ENCODE measurements at regions of chr1 and their contacts with region 1.

Region 1: DNA sequence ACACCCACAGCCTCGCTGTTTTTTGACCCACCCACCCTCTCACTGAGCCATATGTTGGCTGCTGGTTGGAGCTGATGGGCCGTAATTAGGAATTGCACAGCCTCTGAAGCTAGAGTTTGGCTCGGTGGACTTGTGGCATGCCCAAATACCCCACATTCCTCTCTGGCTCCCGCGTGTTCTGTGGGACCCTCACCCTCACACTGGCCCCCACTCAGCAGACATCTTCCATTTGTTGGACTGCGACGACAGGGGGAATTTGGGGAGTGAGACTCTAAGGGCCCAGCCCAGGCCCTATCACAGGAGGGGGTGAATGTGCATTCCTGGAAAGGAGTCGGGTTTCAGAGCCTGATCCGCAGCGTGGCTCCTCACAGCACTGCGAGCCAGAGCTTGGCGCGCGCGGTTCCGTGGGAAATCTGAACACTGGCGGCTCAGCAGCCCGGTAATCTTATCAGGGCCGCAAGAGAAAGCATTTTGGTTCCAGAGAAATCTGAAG is 5.2 kb downstream of the RCSD1 start:
- DNase-seq: no peak
- ATAC-seq: no peak
- H3K4me3 ChIP-seq: no peak overlapping the region
- H3K4me3 Mint-ChIP-seq: no peak overlapping the region
- H3K27ac ChIP-seq: peak overlapping the region; percentile 59 to 90
- H3K27ac Mint-ChIP-seq: peak overlapping the region; percentile 93
- H3K4me1 ChIP-seq: peaks cover 84% of the 10 kb centered on the region
- H3K4me1 Mint-ChIP-seq: peaks cover 88% of the 10 kb centered on the region
- H3K27me3 ChIP-seq: no peaks in the 10 kb centered on the region
- H3K27me3 Mint-ChIP-seq: no peaks in the 10 kb centered on the region
- CTCF ChIP-seq: no peak

Region 2: GRCh38 chr1:167342846-167343245 is 292.4 kb before region 1 on chr1:
- CTCF ChIA-PET with region 1: no interaction called
- POLR2A ChIA-PET with region 1: no interaction called
- intact Hi-C with region 1: no loop called
- DNase-seq: peak in 3 of 14 experiments; percentile 17 to 33 (median 28)
- ATAC-seq: no peak
- H3K4me3 ChIP-seq: no peak overlapping the region
- H3K4me3 Mint-ChIP-seq: no peak overlapping the region
- H3K27ac ChIP-seq: no peak overlapping the region
- H3K27ac Mint-ChIP-seq: no peak overlapping the region
- H3K4me1 ChIP-seq: no peaks in the 10 kb centered on the region
- H3K4me1 Mint-ChIP-seq: peaks cover 5% of the 10 kb centered on the region
- H3K27me3 ChIP-seq: no peaks in the 10 kb centered on the region
- H3K27me3 Mint-ChIP-seq: no peaks in the 10 kb centered on the region
- CTCF ChIP-seq: peak; percentile 36

Region 3: GRCh38 chr1:167553136-167554027 is 81.8 kb before region 1 on chr1 and contains the start of gene CREG1:
- CTCF ChIA-PET with region 1: interaction called, 20 read pairs
- POLR2A ChIA-PET with region 1: interaction called, 14 read pairs
- intact Hi-C with region 1: loop called (anchors 1 to 10 kb)
- DNase-seq: peak; percentile 76 to 95 (median 86)
- ATAC-seq: peak; percentile 97
- H3K4me3 ChIP-seq: peak within 1 kb of the TSS; percentile 75
- H3K4me3 Mint-ChIP-seq: peak within 1 kb of the TSS; percentile 96
- H3K27ac ChIP-seq: peak within 1 kb of the TSS in 1 of 2 donors; percentile 25
- H3K27ac Mint-ChIP-seq: peak within 1 kb of the TSS; percentile 81
- H3K4me1 ChIP-seq: peaks cover 25% of the 10 kb centered on the region
- H3K4me1 Mint-ChIP-seq: peaks cover 42% of the 10 kb centered on the region
- H3K27me3 ChIP-seq: no peaks in the 10 kb centered on the region
- H3K27me3 Mint-ChIP-seq: no peaks in the 10 kb centered on the region
- CTCF ChIP-seq: no peak
- total RNA-seq, gene CREG1: 10.7 to 11.2 TPM

Region 4: GRCh38 chr1:167578939-167579521 is 56.2 kb before region 1 on chr1:
- CTCF ChIA-PET with region 1: no interaction called
- POLR2A ChIA-PET with region 1: no interaction called
- intact Hi-C with region 1: no loop called
- DNase-seq: no peak
- ATAC-seq: no peak
- H3K4me3 ChIP-seq: no peak overlapping the region
- H3K4me3 Mint-ChIP-seq: no peak overlapping the region
- H3K27ac ChIP-seq: no peak overlapping the region
- H3K27ac Mint-ChIP-seq: no peak overlapping the region
- H3K4me1 ChIP-seq: no peaks in the 10 kb centered on the region
- H3K4me1 Mint-ChIP-seq: no peaks in the 10 kb centered on the region
- H3K27me3 ChIP-seq: no peaks in the 10 kb centered on the region
- H3K27me3 Mint-ChIP-seq: peaks cover 8% of the 10 kb centered on the region
- CTCF ChIP-seq: no peak

Region 5: GRCh38 chr1:167650269-167651160 is 15.3 kb after region 1 on chr1:
- CTCF ChIA-PET with region 1: interaction called, 12 read pairs
- POLR2A ChIA-PET with region 1: interaction called, 16 read pairs
- intact Hi-C with region 1: loop called in 1 of 2 experiments (anchors 1 kb)
- DNase-seq: peak in 2 of 14 experiments; percentile 20 to 30
- ATAC-seq: no peak
- H3K4me3 ChIP-seq: no peak overlapping the region
- H3K4me3 Mint-ChIP-seq: peak overlapping the region; percentile 81
- H3K27ac ChIP-seq: peak overlapping the region; percentile 28 to 57
- H3K27ac Mint-ChIP-seq: peak overlapping the region; percentile 81
- H3K4me1 ChIP-seq: peaks cover 88% of the 10 kb centered on the region
- H3K4me1 Mint-ChIP-seq: peaks cover 95% of the 10 kb centered on the region
- H3K27me3 ChIP-seq: no peaks in the 10 kb centered on the region
- H3K27me3 Mint-ChIP-seq: no peaks in the 10 kb centered on the region
- CTCF ChIP-seq: no peak

Region 6: DNA sequence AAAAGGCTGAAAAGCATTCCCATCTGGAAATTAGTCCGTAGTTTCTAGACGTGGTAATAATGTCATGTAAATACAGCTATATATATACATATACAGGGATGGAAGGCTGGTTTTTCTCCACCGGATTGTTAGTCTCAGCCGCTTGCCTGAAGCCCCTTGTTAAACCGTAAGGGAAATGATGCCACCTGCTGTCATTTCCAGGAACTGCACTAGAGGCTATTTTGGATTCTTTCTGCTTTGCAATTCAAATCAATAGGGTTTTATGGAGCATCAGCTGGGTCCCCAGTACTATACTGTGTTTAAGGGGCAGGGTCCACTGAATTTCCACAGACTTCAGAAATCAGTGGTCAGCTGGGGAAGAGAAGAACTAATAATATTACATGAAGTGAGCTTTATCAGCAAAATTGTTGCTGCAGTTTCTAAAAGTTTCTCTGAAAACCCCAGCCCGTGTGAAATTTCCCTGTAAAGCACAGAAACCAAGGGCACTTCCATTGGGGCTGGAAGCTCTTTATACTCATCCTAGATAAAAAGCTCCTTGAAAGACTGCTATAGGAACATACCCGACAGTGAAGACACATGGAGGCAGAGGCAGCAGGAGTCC is 52.8 kb after region 1 on chr1:
- CTCF ChIA-PET with region 1: interaction called, 25 read pairs
- POLR2A ChIA-PET with region 1: interaction called, 11 read pairs
- intact Hi-C with region 1: loop called (anchors 1 to 2 kb)
- DNase-seq: peak; percentile 40 to 89 (median 74)
- ATAC-seq: peak; percentile 85
- H3K4me3 ChIP-seq: no peak overlapping the region
- H3K4me3 Mint-ChIP-seq: no peak overlapping the region
- H3K27ac ChIP-seq: no peak overlapping the region
- H3K27ac Mint-ChIP-seq: peak overlapping the region; percentile 21
- H3K4me1 ChIP-seq: peaks cover 16% of the 10 kb centered on the region
- H3K4me1 Mint-ChIP-seq: peaks cover 11% of the 10 kb centered on the region
- H3K27me3 ChIP-seq: no peaks in the 10 kb centered on the region
- H3K27me3 Mint-ChIP-seq: no peaks in the 10 kb centered on the region
- CTCF ChIP-seq: peak; percentile 92

Region 7: GRCh38 chr1:167715157-167715999 is 80.2 kb after region 1 on chr1:
- CTCF ChIA-PET with region 1: interaction called, 4 read pairs
- POLR2A ChIA-PET with region 1: interaction called, 19 read pairs
- intact Hi-C with region 1: no loop called
- DNase-seq: peak; percentile 75 to 94 (median 84)
- ATAC-seq: peak; percentile 59
- H3K4me3 ChIP-seq: peak overlapping the region; percentile 79
- H3K4me3 Mint-ChIP-seq: peak overlapping the region; percentile 92
- H3K27ac ChIP-seq: peak overlapping the region in 1 of 2 donors; percentile 27
- H3K27ac Mint-ChIP-seq: peak overlapping the region; percentile 87
- H3K4me1 ChIP-seq: peaks cover 39% of the 10 kb centered on the region
- H3K4me1 Mint-ChIP-seq: peaks cover 47% of the 10 kb centered on the region
- H3K27me3 ChIP-seq: no peaks in the 10 kb centered on the region
- H3K27me3 Mint-ChIP-seq: peaks cover 18% of the 10 kb centered on the region
- CTCF ChIP-seq: peak; percentile 92